AG04449 (cell line): ENCODE measurements at regions of chr22 and their contacts with region 1.

Region 1: GRCh38 chr22:35257321-35258190 is at the start of gene HMGXB4:
- DNase-seq: peak; percentile 38
- H3K4me3 ChIP-seq: peak within 1 kb of the TSS; percentile 72
- CTCF ChIP-seq: peak; percentile 5

Region 2: GRCh38 chr22:35204807-35205775 is 52.5 kb before region 1 on chr22:
- CTCF ChIA-PET with region 1: no interaction called
- POLR2A ChIA-PET with region 1: no interaction called
- DNase-seq: no peak
- H3K4me3 ChIP-seq: no peak overlapping the region
- CTCF ChIP-seq: no peak

Region 3: DNA sequence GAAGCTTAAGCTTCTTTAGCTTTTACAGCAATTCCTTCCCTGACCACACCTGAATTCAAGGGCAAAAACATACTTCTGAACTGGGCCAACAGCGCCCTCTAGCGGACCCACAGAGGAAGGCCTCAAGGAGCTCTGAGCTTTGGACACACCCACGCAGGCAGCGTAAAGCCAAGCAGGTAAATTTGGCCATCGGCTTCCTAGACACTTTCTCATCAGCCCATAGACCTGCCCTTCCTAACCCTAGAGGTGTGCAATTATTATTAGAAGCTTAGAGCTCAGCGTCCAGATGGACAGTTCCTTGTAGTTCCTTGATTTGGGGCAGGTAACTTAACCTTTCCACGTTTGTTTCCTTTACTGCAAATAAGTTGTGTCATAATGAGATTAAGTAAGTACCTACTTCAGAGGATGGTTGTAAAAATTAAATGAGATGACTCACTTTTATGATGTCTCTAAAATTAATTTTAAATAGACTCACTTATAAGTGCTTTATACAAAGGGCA is 25.9 kb before region 1 on chr22:
- CTCF ChIA-PET with region 1: interaction called, 16 read pairs
- POLR2A ChIA-PET with region 1: no interaction called
- DNase-seq: no peak
- H3K4me3 ChIP-seq: no peak overlapping the region
- CTCF ChIP-seq: peak; percentile 87

Region 4: GRCh38 chr22:35269630-35270029 is 12.1 kb after region 1 on chr22:
- CTCF ChIA-PET with region 1: interaction called, 10 read pairs
- POLR2A ChIA-PET with region 1: no interaction called
- DNase-seq: no peak
- H3K4me3 ChIP-seq: no peak overlapping the region
- CTCF ChIP-seq: no peak